G401 (cell line): ENCODE measurements at regions of chr1 and their contacts with region 1.

Region 1: DNA sequence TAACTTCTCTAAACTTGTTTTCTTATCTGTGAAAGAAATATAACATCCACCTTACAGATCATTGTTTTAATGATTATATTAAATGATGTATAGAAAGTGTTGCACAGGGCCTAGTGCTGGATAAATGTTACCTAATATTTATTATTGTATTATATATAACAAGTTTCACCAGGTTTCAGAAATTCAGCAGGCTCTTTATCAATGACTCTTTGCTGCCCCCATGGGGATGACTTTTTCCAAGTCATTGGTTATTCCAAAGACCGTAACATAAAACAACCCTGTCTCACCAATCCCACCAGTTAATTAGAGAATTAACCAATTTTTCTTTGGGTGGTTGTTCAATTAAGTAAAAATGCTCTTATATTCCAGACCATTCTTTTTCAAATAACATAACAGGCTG is 7.3 kb upstream of the DEDD start:
- DNase-seq: peak; percentile 27

Region 2: DNA sequence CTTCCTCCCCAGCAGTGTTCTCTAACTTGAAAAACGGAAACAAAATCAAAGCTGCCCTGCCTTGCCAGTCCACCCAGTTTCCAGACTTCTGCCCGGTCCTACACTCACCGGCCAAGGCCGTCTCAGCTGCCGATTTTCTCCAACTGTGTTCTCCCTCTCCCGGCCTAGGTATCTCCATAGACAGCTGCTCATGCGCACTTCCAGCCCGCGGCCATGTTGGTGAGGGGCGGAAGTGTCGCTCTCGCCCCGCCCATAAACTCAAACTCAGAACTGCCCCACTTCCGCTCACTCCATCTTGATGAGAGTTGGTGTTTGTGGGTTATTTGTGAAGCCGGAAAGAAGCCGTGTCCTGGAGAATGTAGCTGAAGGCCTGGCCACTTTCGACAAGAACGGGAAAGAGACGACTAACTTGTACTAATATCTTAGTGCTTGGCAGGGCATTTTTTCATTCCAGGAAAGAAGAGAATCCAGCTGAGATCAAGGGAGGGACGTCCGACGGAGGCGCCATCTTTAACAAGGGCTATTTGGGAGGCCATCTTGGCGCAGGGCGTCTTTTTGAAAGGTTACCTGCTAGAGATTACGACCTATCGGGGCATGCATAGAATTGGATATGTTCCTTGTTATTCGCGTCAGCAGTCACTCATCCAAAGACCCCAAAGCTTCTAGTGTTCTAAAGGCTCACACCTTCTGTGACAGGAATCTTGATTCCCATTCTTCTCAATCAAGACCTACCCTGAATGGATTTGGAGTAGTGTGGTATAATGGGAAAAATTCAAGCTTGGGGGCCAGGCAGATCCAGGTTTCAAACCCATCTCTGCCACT is 93.8 kb before region 1 on chr1 and contains the start of gene USF1:
- in situ Hi-C with region 1: loop called (anchors 10 kb)
- DNase-seq: peak; percentile 96
- total RNA-seq, gene USF1: 95.1 and 108 TPM in 2 replicates